GM23248 (cell line): ENCODE measurements at regions of chr21 and their contacts with region 1.

Region 1: GRCh38 chr21:38505654-38506515 is 7.6 kb upstream of the ERG start:
- DNase-seq: peak; percentile 84
- H3K4me3 ChIP-seq: no peak overlapping the region
- H3K27ac ChIP-seq: no peak overlapping the region
- H3K4me1 ChIP-seq: peaks cover 7% of the 10 kb centered on the region; the same call in 1 of the 2 replicates
- H3K27me3 ChIP-seq: 0 out of 2 replicates have a peak, but pooled peaks cover 3% of the 10 kb centered on the region

Region 2: DNA sequence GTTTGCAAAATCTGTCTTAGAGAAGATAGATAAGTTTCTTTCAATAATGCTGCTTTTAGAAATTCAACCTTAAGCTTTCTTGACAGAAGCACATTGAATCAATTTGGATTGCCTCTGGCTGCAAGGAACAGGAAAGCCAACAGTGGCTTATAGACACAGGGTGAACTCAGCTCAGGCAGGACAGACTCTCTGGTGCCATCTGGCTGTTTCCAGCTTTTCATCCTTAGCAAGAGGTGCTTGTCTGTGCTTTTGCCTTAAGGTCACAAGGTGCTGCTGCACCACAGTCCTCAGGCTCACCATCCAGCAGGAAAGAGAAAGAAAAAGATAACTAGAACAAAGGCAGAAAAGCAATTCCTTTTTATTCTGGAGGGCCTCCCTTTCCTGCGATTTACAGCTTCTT is 206.2 kb after region 1 on chr21:
- in situ Hi-C with region 1: loop called (anchors 10 kb)
- DNase-seq: peak; percentile 63
- H3K4me3 ChIP-seq: no peak overlapping the region
- H3K27ac ChIP-seq: no peak overlapping the region
- H3K4me1 ChIP-seq: no peaks in the 10 kb centered on the region
- H3K27me3 ChIP-seq: 0 out of 2 replicates have a peak, but pooled peaks cover 12% of the 10 kb centered on the region

Region 3: GRCh38 chr21:39137248-39138178 is 631.6 kb after region 1 on chr21:
- in situ Hi-C with region 1: loop called (anchors 10 kb)
- DNase-seq: peak; percentile 61
- H3K4me3 ChIP-seq: no peak overlapping the region
- H3K27ac ChIP-seq: no peak overlapping the region
- H3K4me1 ChIP-seq: peaks cover 15% of the 10 kb centered on the region
- H3K27me3 ChIP-seq: no peaks in the 10 kb centered on the region